ENCODE measurements at regions of chr1 and their contacts with region 1.

Region 1: DNA sequence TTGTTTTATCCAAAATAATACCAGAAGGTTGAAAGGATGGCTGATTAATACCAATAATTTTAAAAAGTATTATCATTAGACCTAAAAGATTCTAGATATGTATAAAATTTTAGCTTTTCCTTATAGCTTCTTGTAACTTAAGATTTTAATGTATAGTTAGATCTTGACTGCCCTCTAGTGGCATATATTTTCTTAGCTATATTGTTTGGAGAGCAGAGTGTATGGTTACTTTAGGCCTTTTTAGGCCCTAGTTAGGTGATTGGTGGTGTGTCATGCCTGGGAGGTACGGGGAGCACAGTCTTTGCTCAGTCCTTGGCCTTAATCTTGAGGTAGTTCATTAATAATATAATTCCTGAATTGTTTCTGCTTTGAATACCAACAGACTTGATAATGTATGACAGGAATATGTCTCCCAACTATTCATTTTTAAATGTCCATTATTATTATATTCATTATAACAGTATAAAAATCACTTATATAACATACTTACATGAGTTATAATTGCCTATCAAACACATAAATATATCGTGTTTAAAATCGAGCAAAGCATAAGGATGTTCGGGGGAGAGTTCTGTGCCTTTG is 328.4 kb downstream of the ZP4 start:
- DNase-seq: peak; percentile 89
- H3K4me3 Mint-ChIP-seq: no peak overlapping the region
- H3K27ac Mint-ChIP-seq: no peak overlapping the region
- H3K4me1 Mint-ChIP-seq: no peaks in the 10 kb centered on the region
- H3K27me3 Mint-ChIP-seq: no peaks in the 10 kb centered on the region
- CTCF ChIP-seq: peak; percentile 79

Region 2: DNA sequence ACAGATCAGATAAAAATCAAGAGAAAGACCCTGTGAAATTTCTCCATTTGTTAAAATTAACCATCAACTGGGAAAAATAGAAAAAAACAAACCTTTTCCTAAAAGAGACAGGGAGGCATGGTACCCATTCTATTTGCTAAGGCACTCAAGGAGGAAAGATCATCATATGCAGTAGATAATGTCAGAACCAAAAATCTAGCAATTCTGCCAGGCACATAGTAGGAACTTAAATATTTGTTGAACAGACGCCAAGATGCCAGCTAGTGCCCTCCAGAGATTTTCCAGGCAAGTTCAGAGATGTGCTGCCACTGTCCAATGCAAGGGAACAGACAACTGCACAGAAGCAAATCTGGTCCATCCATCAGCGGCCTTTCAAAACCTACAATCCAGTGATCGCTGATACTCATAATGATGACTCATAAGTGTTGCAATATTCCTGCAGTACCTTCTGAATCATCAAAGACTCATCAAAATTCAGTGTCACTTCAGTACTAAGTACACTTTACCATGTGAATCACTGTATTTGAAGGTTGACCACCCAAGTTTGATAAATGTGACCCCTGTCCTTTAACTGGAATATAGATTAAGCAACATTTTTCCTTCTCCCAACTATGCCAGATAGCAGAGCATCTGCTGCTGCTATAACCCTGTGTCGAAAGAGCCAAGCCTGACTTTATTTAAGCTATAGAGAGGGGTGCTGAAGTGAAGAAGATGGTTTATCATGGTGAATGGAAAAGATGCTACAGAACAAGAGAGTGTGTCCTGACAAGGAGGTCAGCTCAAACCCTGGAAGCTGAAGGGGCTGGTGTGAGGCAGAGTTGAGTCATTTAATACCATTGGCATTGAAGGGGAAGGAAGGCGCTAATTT is 657.2 kb before region 1 on chr1:
- CTCF ChIA-PET with region 1: interaction called, 7 read pairs
- POLR2A ChIA-PET with region 1: no interaction called
- intact Hi-C with region 1: loop called (anchors 10 kb)
- DNase-seq: peak; percentile 96
- H3K4me3 Mint-ChIP-seq: no peak overlapping the region
- H3K27ac Mint-ChIP-seq: no peak overlapping the region
- H3K4me1 Mint-ChIP-seq: peaks cover 11% of the 10 kb centered on the region
- H3K27me3 Mint-ChIP-seq: no peaks in the 10 kb centered on the region
- CTCF ChIP-seq: no peak

Region 3: GRCh38 chr1:237394281-237394680 is 168.1 kb before region 1 on chr1:
- CTCF ChIA-PET with region 1: interaction called, 20 read pairs
- POLR2A ChIA-PET with region 1: interaction called, 6 read pairs
- intact Hi-C with region 1: no loop called
- DNase-seq: no peak
- H3K4me3 Mint-ChIP-seq: no peak overlapping the region
- H3K27ac Mint-ChIP-seq: no peak overlapping the region
- H3K4me1 Mint-ChIP-seq: peaks cover 6% of the 10 kb centered on the region
- H3K27me3 Mint-ChIP-seq: peaks cover 8% of the 10 kb centered on the region
- CTCF ChIP-seq: no peak

Region 4: GRCh38 chr1:237542525-237543418 is 19.6 kb before region 1 on chr1:
- CTCF ChIA-PET with region 1: interaction called, 40 read pairs
- POLR2A ChIA-PET with region 1: no interaction called
- intact Hi-C with region 1: no loop called
- DNase-seq: peak; percentile 46
- H3K4me3 Mint-ChIP-seq: no peak overlapping the region
- H3K27ac Mint-ChIP-seq: no peak overlapping the region
- H3K4me1 Mint-ChIP-seq: no peaks in the 10 kb centered on the region
- H3K27me3 Mint-ChIP-seq: no peaks in the 10 kb centered on the region
- CTCF ChIP-seq: no peak

Region 5: GRCh38 chr1:237684236-237684635 is 121.9 kb after region 1 on chr1:
- CTCF ChIA-PET with region 1: no interaction called
- POLR2A ChIA-PET with region 1: no interaction called
- intact Hi-C with region 1: no loop called
- DNase-seq: peak; percentile 42
- H3K4me3 Mint-ChIP-seq: no peak overlapping the region
- H3K27ac Mint-ChIP-seq: no peak overlapping the region
- H3K4me1 Mint-ChIP-seq: no peaks in the 10 kb centered on the region
- H3K27me3 Mint-ChIP-seq: no peaks in the 10 kb centered on the region
- CTCF ChIP-seq: no peak

Region 6: GRCh38 chr1:237701534-237701933 is 139.2 kb after region 1 on chr1:
- CTCF ChIA-PET with region 1: no interaction called
- POLR2A ChIA-PET with region 1: no interaction called
- intact Hi-C with region 1: no loop called
- DNase-seq: no peak
- H3K4me3 Mint-ChIP-seq: no peak overlapping the region
- H3K27ac Mint-ChIP-seq: no peak overlapping the region
- H3K4me1 Mint-ChIP-seq: peaks cover 5% of the 10 kb centered on the region
- H3K27me3 Mint-ChIP-seq: no peaks in the 10 kb centered on the region
- CTCF ChIP-seq: no peak

Measured in MCF 10A (cell line).